PC-3 (cell line): ENCODE measurements at regions of chr5 and their contacts with region 1.

Region 1: DNA sequence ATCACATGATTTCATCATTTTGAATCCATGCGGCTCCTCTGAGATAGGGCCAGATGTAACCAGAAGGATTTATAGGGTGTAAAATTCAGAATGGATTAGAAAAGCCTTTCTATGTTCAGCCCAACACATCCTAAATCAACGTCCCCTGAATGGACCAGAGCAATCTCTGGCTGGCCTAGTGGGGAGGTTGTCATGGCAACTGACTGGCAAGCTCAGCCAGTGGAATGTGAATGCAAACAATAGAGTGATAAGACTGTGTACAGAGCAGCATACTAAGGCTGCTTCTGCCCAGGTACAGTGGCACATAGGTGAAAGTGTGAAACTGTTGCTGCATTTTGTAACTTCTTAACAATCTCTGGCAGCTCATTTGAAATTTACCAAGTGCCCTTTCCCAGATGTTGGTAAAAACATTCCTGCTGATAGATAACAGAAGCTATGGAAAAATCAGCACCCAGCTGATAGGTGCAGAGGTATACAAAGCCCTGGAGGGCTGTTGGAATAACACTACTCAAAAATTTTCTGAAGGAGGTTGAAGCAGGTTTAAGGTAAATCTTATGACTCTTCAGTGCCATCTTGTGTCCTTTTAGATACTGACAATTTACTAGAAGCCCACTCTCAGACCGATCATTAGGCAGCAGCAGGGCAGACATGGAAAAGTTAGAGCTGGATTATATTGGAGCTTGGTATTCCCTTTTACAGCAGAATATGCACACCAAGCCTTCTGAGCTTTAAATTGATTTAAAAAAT is 267.2 kb downstream of the RAB3C start:
- DNase-seq: peak; percentile 56
- ATAC-seq: peak; percentile 73
- H3K4me3 ChIP-seq: no peak overlapping the region
- H3K27ac ChIP-seq: no peak overlapping the region
- H3K4me1 ChIP-seq: no peaks in the 10 kb centered on the region
- H3K27me3 ChIP-seq: peaks cover 29% of the 10 kb centered on the region
- CTCF ChIP-seq: peak; percentile 55

Region 2: GRCh38 chr5:58477760-58478376 is 372.2 kb before region 1 on chr5:
- CTCF ChIA-PET with region 1: no interaction called
- POLR2A ChIA-PET with region 1: no interaction called
- intact Hi-C with region 1: loop called (anchors 2 kb)
- DNase-seq: no peak
- ATAC-seq: no peak
- H3K4me3 ChIP-seq: no peak overlapping the region
- H3K27ac ChIP-seq: no peak overlapping the region
- H3K4me1 ChIP-seq: no peaks in the 10 kb centered on the region
- H3K27me3 ChIP-seq: no peaks in the 10 kb centered on the region
- CTCF ChIP-seq: peak; percentile 40; the same call in 1 of the 2 replicates

Region 3: DNA sequence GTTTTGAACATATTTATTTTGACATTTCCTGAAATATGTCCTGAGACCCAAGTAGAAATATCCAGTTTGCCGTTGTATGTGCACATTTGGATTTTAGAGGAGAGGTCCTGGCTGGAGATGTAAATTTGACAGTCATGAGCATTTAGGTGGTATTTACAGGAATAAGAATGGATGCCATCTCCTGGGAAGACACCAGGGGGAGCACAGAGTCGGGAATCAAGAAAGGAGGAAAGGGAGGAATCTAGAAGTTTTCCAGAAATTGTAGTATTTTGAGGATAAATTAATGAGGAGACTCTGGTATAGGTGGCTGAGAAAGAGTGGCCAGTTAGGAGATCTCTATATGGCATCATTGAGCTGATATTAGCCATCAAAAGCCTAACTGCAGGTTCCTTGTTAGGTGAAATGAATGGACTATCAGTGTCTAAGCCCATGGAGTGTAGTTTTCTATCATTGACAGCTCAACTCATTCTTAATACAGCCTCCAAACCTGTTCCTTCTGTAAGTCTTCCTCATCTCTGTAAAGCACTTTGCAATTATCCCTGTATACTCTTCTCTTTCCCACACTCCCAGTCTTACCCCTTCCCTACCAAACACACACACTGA is 351.7 kb before region 1 on chr5:
- CTCF ChIA-PET with region 1: interaction called, 3 read pairs
- POLR2A ChIA-PET with region 1: no interaction called
- intact Hi-C with region 1: loop called (anchors 1 kb)
- DNase-seq: peak; percentile 44
- ATAC-seq: no peak
- H3K4me3 ChIP-seq: no peak overlapping the region
- H3K27ac ChIP-seq: no peak overlapping the region
- H3K4me1 ChIP-seq: no peaks in the 10 kb centered on the region
- H3K27me3 ChIP-seq: peaks cover 23% of the 10 kb centered on the region
- CTCF ChIP-seq: peak; percentile 69

Region 4: GRCh38 chr5:58834242-58835225 is 15.6 kb before region 1 on chr5:
- CTCF ChIA-PET with region 1: no interaction called
- POLR2A ChIA-PET with region 1: no interaction called
- intact Hi-C with region 1: no loop called
- DNase-seq: no peak
- ATAC-seq: no peak
- H3K4me3 ChIP-seq: no peak overlapping the region
- H3K27ac ChIP-seq: no peak overlapping the region
- H3K4me1 ChIP-seq: no peaks in the 10 kb centered on the region
- H3K27me3 ChIP-seq: 0 out of 2 replicates have a peak, but pooled peaks cover 9% of the 10 kb centered on the region
- CTCF ChIP-seq: no peak